AG04449 (cell line): ENCODE measurements at regions of chr2 and their contacts with region 1.

Region 1: GRCh38 chr2:64523666-64524603 is at the start of gene AFTPH:
- DNase-seq: peak; percentile 87
- H3K4me3 ChIP-seq: peak within 1 kb of the TSS; percentile 91
- CTCF ChIP-seq: no peak

Region 2: GRCh38 chr2:64504774-64505720 is 18.9 kb before region 1 on chr2:
- CTCF ChIA-PET with region 1: interaction called, 13 read pairs
- POLR2A ChIA-PET with region 1: interaction called, 3 read pairs
- DNase-seq: no peak
- H3K4me3 ChIP-seq: no peak overlapping the region
- CTCF ChIP-seq: no peak

Region 3: GRCh38 chr2:64551851-64552250 is 27.9 kb after region 1 on chr2:
- CTCF ChIA-PET with region 1: interaction called, 137 read pairs
- POLR2A ChIA-PET with region 1: no interaction called
- DNase-seq: no peak
- H3K4me3 ChIP-seq: no peak overlapping the region
- CTCF ChIP-seq: no peak

Region 4: DNA sequence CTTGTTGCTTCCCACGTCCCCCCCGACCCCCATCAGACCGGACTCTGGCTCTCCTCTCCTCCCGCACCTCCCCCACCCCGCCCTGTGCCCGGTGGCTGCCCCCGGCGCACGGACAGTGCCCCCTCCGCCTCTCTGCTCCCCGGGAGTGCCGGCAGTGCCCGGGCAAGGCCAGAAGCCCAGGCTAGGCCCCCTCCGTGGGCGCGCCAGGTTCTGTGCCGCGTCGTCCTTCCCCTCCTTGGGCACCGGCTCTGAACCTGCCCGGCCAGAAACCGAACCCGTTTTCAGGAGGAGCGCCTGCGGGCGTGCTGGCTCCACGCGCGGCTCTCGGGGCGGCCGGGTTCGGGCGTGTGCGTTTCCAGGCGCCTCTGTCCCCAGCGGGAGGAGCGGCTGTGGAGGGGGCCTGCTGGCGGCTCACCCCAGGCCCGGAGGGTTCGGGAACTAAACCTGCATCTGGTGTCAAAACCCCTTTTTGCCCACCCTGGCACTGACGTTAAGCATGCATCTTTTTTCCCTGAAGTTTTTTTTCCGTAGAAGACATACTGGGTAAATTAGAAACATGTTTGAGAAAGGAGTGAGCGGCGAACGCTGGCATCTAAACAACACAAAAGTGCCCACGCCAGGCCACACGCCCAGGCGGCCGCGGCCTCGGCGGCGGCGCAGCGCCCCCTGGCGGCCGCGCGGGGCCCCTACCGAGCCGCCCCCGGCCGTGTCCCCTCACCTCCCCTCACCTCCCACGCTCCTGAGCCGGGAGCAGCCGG is 341.3 kb after region 1 on chr2:
- CTCF ChIA-PET with region 1: interaction called, 18 read pairs
- POLR2A ChIA-PET with region 1: no interaction called
- DNase-seq: no peak
- H3K4me3 ChIP-seq: peak overlapping the region; percentile 54
- CTCF ChIP-seq: peak; percentile 46

Region 5: GRCh38 chr2:64888591-64889309 is 364.8 kb after region 1 on chr2:
- CTCF ChIA-PET with region 1: interaction called, 12 read pairs
- POLR2A ChIA-PET with region 1: no interaction called
- DNase-seq: no peak
- H3K4me3 ChIP-seq: no peak overlapping the region
- CTCF ChIP-seq: peak; percentile 42